ENCODE measurements at regions of chr12 and their contacts with region 1.

Region 1: DNA sequence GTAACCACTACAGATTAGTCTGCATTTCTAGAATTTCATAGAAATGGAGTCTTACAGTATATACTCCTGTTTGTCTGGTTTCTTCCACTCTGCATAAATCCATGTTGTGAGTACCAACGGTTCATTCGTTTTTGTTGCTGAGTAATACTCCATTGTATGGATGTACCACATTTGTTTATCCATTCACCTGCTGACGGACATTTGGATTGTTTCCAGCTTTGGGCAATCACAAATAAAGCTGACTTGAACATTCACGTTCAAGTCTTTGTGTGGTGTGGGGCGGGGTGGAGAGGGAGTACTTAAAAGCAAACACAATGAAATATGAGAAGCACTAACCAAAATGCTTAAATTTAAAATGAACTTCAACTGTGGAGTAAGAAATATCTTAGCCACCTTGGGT is 7.1 kb downstream of the HECTD4 start:
- DNase-seq: no peak
- ATAC-seq: no peak

Region 2: GRCh38 chr12:112314981-112315380 is 60.1 kb before region 1 on chr12:
- intact Hi-C with region 1: loop called in 1 of 2 experiments (anchors 10 kb)
- DNase-seq: no peak
- ATAC-seq: no peak

Region 3: GRCh38 chr12:113092607-113093408 is 717.7 kb after region 1 on chr12:
- intact Hi-C with region 1: no loop called
- DNase-seq: peak; percentile 61
- ATAC-seq: peak; percentile 31 to 63

Measured in left cardiac atrium (tissue), 4 donors.